ENCODE measurements at regions of chr14 and their contacts with region 1.

Region 1: DNA sequence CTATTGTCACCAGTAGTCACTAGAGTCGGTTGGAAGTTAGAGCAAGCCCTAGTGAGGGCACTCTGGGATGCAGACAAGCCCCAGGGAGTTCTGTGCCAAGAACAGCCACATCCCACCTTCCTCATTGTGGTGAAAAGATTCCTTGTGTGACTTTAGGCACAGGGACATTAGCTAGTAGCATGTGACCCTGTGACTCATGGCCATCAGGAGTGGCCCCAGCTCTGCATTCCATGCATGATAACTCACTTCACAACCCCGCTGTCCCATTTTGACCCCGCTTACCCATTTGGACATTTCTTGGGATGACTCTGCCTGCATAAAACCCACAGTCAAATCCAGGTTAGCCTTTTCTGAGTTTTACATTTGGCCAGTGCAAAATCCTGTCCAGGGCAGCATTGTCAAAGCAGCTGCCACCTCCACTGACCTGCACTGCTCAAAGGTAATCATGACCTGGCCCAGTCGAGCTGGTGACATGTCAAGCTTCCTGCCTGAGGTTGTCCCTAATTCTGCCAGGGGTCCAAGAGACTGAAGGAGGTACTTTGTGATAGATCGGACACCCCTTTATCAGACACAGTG is 430.5 kb downstream of the DPF3 start:
- DNase-seq: peak; percentile 73
- ATAC-seq: peak; percentile 96
- H3K4me3 ChIP-seq: peak overlapping the region in 1 of 2 experiments; percentile 39; a peak in 2 of 4 replicates
- H3K27ac ChIP-seq: peak overlapping the region; percentile 24; the same call in 1 of the 2 replicates
- H3K4me1 ChIP-seq: peaks cover 14 to 24% of the 10 kb centered on the region in 2 experiments
- H3K27me3 ChIP-seq: no peaks in the 10 kb centered on the region
- CTCF ChIP-seq: no peak
- POLR2A ChIP-seq: no peak
- RAD21 ChIP-seq: no peak

Region 2: GRCh38 chr14:72476657-72477499 is 13.5 kb after region 1 on chr14:
- CTCF ChIA-PET with region 1: no interaction called
- POLR2A ChIA-PET with region 1: interaction called, 10 read pairs
- RAD21 ChIA-PET with region 1: no interaction called
- intact Hi-C with region 1: no loop called
- DNase-seq: peak; percentile 76
- ATAC-seq: peak; percentile 90
- H3K4me3 ChIP-seq: peak overlapping the region; percentile 15 to 40; a peak in 3 of 4 replicates
- H3K27ac ChIP-seq: peak overlapping the region; percentile 53
- H3K4me1 ChIP-seq: peaks cover 22 to 30% of the 10 kb centered on the region in 2 experiments
- H3K27me3 ChIP-seq: no peaks in the 10 kb centered on the region
- CTCF ChIP-seq: no peak
- POLR2A ChIP-seq: no peak
- RAD21 ChIP-seq: peak; percentile 16; the same call in 1 of the 2 replicates

Region 3: DNA sequence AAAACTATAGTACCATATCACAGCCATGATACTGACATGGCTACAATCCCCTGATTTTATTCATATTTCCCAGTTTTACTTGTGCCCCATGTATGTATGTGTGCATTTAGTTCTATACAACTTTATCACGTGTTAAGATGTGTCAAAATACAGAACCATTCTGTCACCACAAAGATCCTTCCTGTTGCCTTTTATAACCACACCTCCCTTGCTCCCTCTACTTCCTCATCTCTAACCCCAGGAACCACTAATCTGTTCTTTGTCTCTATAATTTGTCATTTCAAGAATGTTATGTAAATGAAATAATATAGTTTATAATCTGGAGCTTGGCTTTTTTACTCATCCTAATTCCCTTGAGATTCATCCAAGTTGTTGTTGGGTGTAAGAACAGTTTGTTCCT is 72.1 kb after region 1 on chr14:
- CTCF ChIA-PET with region 1: no interaction called
- POLR2A ChIA-PET with region 1: no interaction called
- RAD21 ChIA-PET with region 1: no interaction called
- intact Hi-C with region 1: no loop called
- DNase-seq: no peak
- ATAC-seq: no peak
- H3K4me3 ChIP-seq: no peak overlapping the region
- H3K27ac ChIP-seq: no peak overlapping the region
- H3K4me1 ChIP-seq: no peaks in the 10 kb centered on the region
- H3K27me3 ChIP-seq: no peaks in the 10 kb centered on the region
- CTCF ChIP-seq: no peak
- POLR2A ChIP-seq: no peak
- RAD21 ChIP-seq: no peak

Region 4: DNA sequence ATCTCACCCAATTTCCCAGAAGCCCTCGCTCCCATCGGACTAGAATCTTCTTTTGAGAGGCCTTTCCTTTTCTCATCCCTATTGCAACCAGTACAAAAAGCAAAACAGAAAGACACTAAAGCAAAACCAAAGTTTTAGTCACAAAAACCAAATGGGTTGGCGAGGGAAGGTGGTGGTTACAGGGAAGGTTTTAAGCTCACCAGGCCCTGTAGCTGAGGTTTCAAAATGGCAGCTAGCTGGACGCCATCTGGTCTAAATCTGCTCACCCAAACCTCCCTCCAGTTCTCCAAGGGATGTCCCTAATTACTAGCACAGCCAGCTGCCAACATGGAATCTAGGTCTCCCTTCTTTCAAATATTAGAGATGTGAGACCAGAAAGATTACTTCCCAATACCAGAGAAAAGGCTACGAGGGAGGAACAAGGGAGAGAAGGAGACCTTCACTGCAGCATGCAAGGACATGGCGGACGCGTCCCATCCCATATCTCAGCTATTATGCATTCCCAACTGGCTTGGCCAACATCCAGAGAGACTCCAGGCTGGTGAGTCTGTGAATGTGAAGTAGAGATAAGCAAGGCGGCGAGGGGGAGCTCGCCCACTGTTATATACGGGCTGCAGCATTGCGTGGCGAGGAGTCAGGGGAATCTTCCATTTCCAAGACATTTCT is 359.7 kb after region 1 on chr14:
- CTCF ChIA-PET with region 1: no interaction called
- POLR2A ChIA-PET with region 1: no interaction called
- RAD21 ChIA-PET with region 1: no interaction called
- intact Hi-C with region 1: no loop called
- DNase-seq: no peak
- ATAC-seq: no peak
- H3K4me3 ChIP-seq: no peak overlapping the region
- H3K27ac ChIP-seq: no peak overlapping the region
- H3K4me1 ChIP-seq: no peaks in the 10 kb centered on the region
- H3K27me3 ChIP-seq: no peaks in the 10 kb centered on the region
- CTCF ChIP-seq: no peak
- POLR2A ChIP-seq: no peak
- RAD21 ChIP-seq: no peak

Region 5: GRCh38 chr14:73463411-73463810 is 1000.0 kb after region 1 on chr14:
- CTCF ChIA-PET with region 1: no interaction called
- POLR2A ChIA-PET with region 1: no interaction called
- RAD21 ChIA-PET with region 1: no interaction called
- intact Hi-C with region 1: loop called (anchors 5 kb)
- DNase-seq: no peak
- ATAC-seq: no peak
- H3K4me3 ChIP-seq: no peak overlapping the region
- H3K27ac ChIP-seq: no peak overlapping the region
- H3K4me1 ChIP-seq: peaks cover 3 to 12% of the 10 kb centered on the region in 2 experiments; a peak in 3 of 4 replicates
- H3K27me3 ChIP-seq: no peaks in the 10 kb centered on the region
- CTCF ChIP-seq: no peak
- POLR2A ChIP-seq: no peak
- RAD21 ChIP-seq: no peak

Measured in HCT116 (cell line).